Mammary epithelial cell (primary cell): ENCODE measurements at regions of chr11 and their contacts with region 1.

Region 1: GRCh38 chr11:61187505-61188130 is 15.7 kb upstream of the PGA3 start:
- DNase-seq: peak; percentile 40
- H3K4me3 ChIP-seq: no peak overlapping the region
- H3K27ac ChIP-seq: no peak overlapping the region
- H3K4me1 ChIP-seq: no peaks in the 10 kb centered on the region
- H3K27me3 ChIP-seq: no peaks in the 10 kb centered on the region
- CTCF ChIP-seq: peak; percentile 92 to 99

Region 2: GRCh38 chr11:60775420-60775961 is 412.1 kb before region 1 on chr11:
- CTCF ChIA-PET with region 1: interaction called, 8 read pairs
- dilution Hi-C with region 1: no loop called
- in situ Hi-C with region 1: no loop called
- intact Hi-C with region 1: loop called (anchors 5 kb)
- DNase-seq: peak; percentile 74
- H3K4me3 ChIP-seq: no peak overlapping the region
- H3K27ac ChIP-seq: no peak overlapping the region
- H3K4me1 ChIP-seq: no peaks in the 10 kb centered on the region
- H3K27me3 ChIP-seq: no peaks in the 10 kb centered on the region
- CTCF ChIP-seq: peak; percentile 89 to 93

Region 3: DNA sequence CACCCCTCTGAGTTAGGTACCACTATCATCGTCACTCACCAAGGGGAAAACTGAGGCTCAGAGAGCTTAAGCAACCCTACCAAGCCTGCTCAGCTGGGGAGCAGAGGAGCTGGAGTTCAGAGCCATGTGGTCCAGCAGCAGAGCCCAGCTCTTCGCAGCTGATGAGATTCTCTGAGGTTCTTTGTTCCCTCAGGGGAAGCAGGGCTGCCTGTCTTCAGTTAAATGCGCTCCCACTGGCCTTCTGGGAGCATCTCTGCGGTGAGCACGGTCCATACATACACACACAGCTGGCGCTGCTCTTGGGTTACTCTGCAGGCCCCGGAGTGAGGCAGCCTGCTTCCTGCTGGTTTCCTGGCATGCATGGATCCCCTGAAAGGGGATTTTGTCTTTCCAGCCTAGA is 326.7 kb before region 1 on chr11:
- CTCF ChIA-PET with region 1: no interaction called
- dilution Hi-C with region 1: no loop called
- in situ Hi-C with region 1: no loop called
- intact Hi-C with region 1: no loop called
- DNase-seq: no peak
- H3K4me3 ChIP-seq: no peak overlapping the region
- H3K27ac ChIP-seq: no peak overlapping the region
- H3K4me1 ChIP-seq: no peaks in the 10 kb centered on the region
- H3K27me3 ChIP-seq: no peaks in the 10 kb centered on the region
- CTCF ChIP-seq: no peak

Region 4: DNA sequence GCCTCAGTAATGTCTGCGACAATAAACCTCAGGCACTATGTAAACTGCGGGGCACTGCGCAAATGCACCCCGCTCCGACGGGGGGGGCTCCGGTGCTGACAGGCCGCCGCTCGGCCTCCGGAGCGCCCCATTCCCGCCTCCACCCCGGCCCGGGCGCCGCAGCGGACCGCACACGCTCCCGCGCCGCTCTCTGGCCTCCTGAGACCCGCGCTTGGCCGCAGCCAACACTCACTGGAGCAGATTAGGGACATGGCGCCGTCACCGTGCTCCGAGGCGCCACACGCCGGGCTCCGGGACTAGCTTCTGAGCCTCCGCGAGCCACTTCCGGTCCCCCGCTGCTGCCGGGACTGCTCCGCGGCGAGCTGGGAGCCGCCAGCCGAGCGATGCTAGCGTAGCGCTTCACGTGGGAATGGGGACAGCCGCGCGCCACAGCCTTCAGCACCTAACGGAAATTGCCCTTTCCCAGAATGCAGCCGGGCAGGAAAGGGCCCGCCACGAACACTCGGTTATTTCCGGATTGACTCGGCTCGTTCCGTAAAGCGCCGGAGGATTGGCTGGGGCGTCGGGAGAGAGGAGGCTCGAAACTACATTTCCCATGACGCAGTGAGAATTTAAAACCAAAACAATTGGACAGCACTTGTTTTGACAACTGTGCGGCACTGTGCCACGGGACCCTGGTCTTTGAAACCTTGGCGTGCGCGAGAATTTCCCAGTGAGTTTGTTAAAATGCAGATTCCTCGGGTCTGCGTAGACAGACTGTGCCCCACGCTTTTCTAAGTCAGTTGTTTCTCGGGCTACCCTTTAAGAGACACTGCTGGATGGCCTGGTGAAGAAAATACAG is 281.3 kb before region 1 on chr11 and contains the start of gene PRPF19:
- CTCF ChIA-PET with region 1: no interaction called
- dilution Hi-C with region 1: no loop called
- in situ Hi-C with region 1: no loop called
- intact Hi-C with region 1: loop called (anchors 1 kb)
- DNase-seq: peak; percentile 96
- H3K4me3 ChIP-seq: peak within 1 kb of the TSS; percentile 85 to 92 (median 92)
- H3K27ac ChIP-seq: peak within 1 kb of the TSS; percentile 85
- H3K4me1 ChIP-seq: peaks cover 17% of the 10 kb centered on the region
- H3K27me3 ChIP-seq: no peaks in the 10 kb centered on the region
- CTCF ChIP-seq: no peak
- total RNA-seq, gene PRPF19: 70.0 to 93.2 TPM

Region 5: GRCh38 chr11:60964801-60965200 is 222.8 kb before region 1 on chr11:
- CTCF ChIA-PET with region 1: no interaction called
- dilution Hi-C with region 1: no loop called
- in situ Hi-C with region 1: loop called in 1 of 2 experiments (anchors 10 kb)
- intact Hi-C with region 1: no loop called
- DNase-seq: no peak
- H3K4me3 ChIP-seq: no peak overlapping the region
- H3K27ac ChIP-seq: no peak overlapping the region
- H3K4me1 ChIP-seq: no peaks in the 10 kb centered on the region
- H3K27me3 ChIP-seq: peaks cover 2% of the 10 kb centered on the region
- CTCF ChIP-seq: no peak

Region 6: DNA sequence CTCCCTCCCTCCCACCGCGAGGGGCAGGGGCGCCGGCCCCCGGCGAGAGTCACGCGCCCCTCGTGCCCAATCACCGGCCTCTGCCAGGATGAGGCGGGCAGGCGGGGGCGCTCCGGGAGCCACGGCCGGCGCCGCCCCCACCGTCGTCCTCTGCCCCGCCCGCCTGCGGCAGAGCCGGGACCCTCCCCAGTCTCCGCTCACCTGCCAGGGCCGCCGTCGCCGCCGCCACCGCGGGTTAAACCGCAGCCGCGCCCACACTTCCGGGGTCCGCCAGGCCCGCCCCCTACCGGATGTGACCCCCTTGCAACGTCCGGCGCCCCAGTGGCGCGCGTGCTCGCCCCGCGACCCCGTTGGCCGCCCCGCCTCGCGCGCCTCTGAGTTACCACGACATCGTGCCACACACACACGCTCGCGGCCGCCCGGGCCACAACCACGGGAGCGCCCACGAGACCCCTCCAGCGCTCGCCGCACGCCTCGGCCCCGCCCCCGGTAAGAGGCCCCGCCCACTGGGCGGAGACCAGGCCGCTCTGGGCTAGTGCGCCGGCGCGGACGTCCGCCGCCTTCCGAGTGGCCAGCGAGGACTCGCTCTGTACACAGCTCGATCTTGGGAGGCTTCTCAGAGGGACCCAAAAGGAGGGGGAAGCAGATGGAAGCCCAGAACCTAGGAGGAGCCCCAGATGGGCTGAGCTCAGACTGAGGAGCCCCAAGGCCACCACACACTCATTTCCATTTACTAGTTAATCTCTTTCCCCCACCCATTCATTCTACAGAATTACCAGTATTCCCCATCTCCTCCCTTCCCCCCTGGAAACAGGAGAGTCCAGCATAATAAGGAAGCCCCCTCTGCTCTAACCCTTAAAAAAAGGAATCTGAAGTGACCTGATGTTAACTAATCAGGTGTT is 26.2 kb before region 1 on chr11 and contains the start of gene VPS37C:
- CTCF ChIA-PET with region 1: no interaction called
- dilution Hi-C with region 1: no loop called
- in situ Hi-C with region 1: no loop called
- intact Hi-C with region 1: loop called (anchors 1 kb)
- DNase-seq: peak; percentile 87
- H3K4me3 ChIP-seq: peak within 1 kb of the TSS; percentile 57 to 82 (median 65)
- H3K27ac ChIP-seq: peak within 1 kb of the TSS; percentile 80
- H3K4me1 ChIP-seq: peaks cover 32% of the 10 kb centered on the region
- H3K27me3 ChIP-seq: no peaks in the 10 kb centered on the region
- CTCF ChIP-seq: no peak
- total RNA-seq, gene VPS37C: 10.7 to 17.1 TPM